ENCODE measurements at regions of chr10 and their contacts with region 1.

Region 1: DNA sequence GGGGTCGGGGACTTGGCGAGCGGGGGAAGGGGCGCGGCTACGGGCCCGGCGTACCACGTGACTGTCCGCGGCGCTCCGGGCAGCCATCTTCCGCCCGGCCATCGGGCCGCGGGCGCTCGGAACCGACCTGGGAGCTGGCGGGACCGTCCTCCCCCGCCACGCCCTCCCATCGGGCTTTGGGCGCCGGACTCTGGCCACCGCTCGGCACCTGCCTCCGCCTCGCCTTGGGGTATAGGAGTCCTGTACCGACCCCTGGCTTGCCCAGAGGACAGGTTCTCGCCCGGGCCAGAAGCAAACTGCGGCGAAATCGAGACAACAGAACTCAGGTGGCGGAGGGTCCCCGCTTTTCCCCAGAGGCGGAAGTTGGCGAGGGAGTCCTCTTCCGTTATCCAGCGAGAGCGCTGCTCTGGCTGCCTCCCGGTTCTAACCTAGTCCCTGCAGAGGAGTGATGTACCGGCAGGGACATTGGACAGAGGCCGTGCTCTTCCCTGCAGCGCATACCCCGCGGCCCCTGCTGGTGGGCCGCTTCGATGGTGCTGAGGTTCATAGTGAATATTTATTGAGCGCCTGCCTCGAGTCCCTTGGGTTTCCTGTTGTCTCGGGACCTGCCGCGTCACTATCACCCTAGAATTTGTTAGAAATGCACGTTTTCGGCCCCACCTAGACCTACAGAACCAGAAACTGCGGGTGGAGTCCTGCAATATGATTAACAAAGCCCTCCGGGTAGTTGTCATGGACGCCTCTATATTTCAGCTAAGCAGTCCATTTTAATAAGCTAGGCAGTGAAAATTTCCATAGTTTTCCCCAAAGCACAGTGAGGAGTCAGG is 1.3 kb upstream of the SGMS1 start:
- DNase-seq: peak; percentile 70
- H3K4me3 Mint-ChIP-seq: peak overlapping the region; percentile 82
- H3K27ac Mint-ChIP-seq: peak overlapping the region; percentile 87
- H3K4me1 Mint-ChIP-seq: peaks cover 33% of the 10 kb centered on the region
- H3K27me3 Mint-ChIP-seq: peaks cover 1% of the 10 kb centered on the region

Region 2: GRCh38 chr10:49538381-49539319 is 1086.4 kb before region 1 on chr10 and contains the start of gene ERCC6:
- CTCF ChIA-PET with region 1: no interaction called
- POLR2A ChIA-PET with region 1: no interaction called
- intact Hi-C with region 1: loop called (anchors 5 kb)
- DNase-seq: peak; percentile 98
- H3K4me3 Mint-ChIP-seq: peak within 1 kb of the TSS; percentile 89
- H3K27ac Mint-ChIP-seq: peak within 1 kb of the TSS; percentile 95
- H3K4me1 Mint-ChIP-seq: peaks cover 34% of the 10 kb centered on the region
- H3K27me3 Mint-ChIP-seq: peaks cover 24% of the 10 kb centered on the region
- total RNA-seq, gene ERCC6: 17.5 to 18.8 TPM

Region 3: GRCh38 chr10:50410066-50410811 is 214.8 kb before region 1 on chr10:
- CTCF ChIA-PET with region 1: no interaction called
- POLR2A ChIA-PET with region 1: no interaction called
- intact Hi-C with region 1: no loop called
- DNase-seq: no peak
- H3K4me3 Mint-ChIP-seq: no peak overlapping the region
- H3K27ac Mint-ChIP-seq: no peak overlapping the region
- H3K4me1 Mint-ChIP-seq: peaks cover 10% of the 10 kb centered on the region
- H3K27me3 Mint-ChIP-seq: no peaks in the 10 kb centered on the region

Region 4: GRCh38 chr10:50431791-50432190 is 193.3 kb before region 1 on chr10:
- CTCF ChIA-PET with region 1: no interaction called
- POLR2A ChIA-PET with region 1: no interaction called
- intact Hi-C with region 1: loop called (anchors 1 kb)
- DNase-seq: peak; percentile 39
- H3K4me3 Mint-ChIP-seq: no peak overlapping the region
- H3K27ac Mint-ChIP-seq: no peak overlapping the region
- H3K4me1 Mint-ChIP-seq: peaks cover 31% of the 10 kb centered on the region
- H3K27me3 Mint-ChIP-seq: no peaks in the 10 kb centered on the region

Region 5: DNA sequence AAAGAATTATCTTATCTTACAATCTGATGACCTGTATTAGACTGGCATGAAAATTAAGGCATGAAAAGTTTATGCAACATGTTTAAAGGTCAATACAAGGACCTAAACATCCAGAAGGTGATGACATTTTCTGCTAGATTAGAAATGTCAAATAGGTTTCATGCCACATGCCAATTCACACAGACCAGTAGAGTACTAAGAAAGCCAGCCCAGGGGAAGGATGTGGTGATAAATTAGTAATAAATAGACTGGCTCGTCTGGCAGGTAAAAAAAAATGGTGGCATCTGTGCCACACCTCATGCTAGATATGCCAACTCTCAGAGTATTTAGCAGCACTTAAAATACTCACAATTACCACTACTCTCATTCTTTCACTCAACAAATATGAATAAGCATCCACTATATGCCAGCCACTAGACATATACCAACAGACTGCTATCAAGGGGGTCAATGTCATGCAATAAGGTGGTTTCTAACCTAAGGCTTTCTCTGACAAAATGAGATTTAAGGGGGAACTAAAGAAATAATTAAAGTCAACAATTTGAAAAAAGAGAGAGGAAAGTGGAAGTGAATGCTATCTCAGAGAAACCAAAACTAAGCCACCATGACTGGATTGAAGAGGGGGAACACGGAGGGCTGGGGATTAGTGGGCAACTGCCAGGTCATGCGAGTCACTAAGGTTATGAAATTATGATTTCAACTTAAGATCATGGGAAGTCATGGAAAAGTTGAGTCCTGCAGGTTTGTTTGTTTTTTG is 84.8 kb before region 1 on chr10:
- CTCF ChIA-PET with region 1: no interaction called
- POLR2A ChIA-PET with region 1: interaction called, 19 read pairs
- intact Hi-C with region 1: loop called (anchors 1 kb)
- DNase-seq: peak; percentile 70
- H3K4me3 Mint-ChIP-seq: peak overlapping the region; percentile 36
- H3K27ac Mint-ChIP-seq: peak overlapping the region; percentile 75
- H3K4me1 Mint-ChIP-seq: peaks cover 86% of the 10 kb centered on the region
- H3K27me3 Mint-ChIP-seq: no peaks in the 10 kb centered on the region

Region 6: GRCh38 chr10:50577681-50578350 is 47.3 kb before region 1 on chr10:
- CTCF ChIA-PET with region 1: interaction called, 5 read pairs
- POLR2A ChIA-PET with region 1: interaction called, 5 read pairs
- intact Hi-C with region 1: loop called (anchors 5 kb)
- DNase-seq: peak; percentile 21
- H3K4me3 Mint-ChIP-seq: no peak overlapping the region
- H3K27ac Mint-ChIP-seq: no peak overlapping the region
- H3K4me1 Mint-ChIP-seq: peaks cover 57% of the 10 kb centered on the region
- H3K27me3 Mint-ChIP-seq: no peaks in the 10 kb centered on the region

Region 7: DNA sequence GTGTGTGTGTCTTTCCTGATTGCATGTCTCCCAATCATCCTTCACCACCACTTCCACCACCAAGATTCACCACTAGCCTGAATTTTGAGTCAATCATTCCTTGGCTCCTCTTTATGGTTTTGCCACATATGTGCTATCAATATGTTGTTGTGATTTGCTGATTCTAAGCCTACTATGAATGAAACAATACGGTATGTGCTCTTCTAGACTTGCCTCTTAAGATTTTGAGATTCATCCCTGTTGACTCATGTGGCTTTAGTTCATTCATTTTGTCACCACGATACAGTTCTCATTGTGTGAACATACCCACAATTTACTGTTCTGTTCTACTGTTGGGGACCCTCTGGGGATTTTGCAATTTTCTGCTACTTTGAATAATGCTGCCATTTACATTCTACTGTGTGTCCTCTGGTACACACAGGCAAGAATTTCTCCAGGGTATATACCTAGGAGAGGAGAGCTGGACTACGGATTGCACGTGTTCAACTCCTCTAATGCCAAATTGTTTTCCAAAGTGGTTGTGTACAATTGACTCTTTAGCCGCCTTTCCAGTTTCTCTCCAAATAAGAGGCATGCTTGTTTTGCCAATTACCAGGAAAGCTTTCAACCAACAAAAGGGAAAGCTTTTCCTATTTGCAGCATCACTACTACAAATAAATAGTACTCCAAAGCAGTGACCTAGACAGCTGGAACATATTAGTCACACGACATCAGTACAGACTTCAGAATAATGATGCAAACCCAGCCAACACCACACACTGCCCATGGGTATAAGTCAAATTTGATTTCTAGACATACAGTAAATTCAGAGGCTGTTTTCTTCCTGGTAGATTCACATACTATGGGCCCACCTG is 31.3 kb before region 1 on chr10:
- CTCF ChIA-PET with region 1: no interaction called
- POLR2A ChIA-PET with region 1: no interaction called
- intact Hi-C with region 1: no loop called
- DNase-seq: no peak
- H3K4me3 Mint-ChIP-seq: no peak overlapping the region
- H3K27ac Mint-ChIP-seq: no peak overlapping the region
- H3K4me1 Mint-ChIP-seq: peaks cover 13% of the 10 kb centered on the region
- H3K27me3 Mint-ChIP-seq: no peaks in the 10 kb centered on the region

Region 8: DNA sequence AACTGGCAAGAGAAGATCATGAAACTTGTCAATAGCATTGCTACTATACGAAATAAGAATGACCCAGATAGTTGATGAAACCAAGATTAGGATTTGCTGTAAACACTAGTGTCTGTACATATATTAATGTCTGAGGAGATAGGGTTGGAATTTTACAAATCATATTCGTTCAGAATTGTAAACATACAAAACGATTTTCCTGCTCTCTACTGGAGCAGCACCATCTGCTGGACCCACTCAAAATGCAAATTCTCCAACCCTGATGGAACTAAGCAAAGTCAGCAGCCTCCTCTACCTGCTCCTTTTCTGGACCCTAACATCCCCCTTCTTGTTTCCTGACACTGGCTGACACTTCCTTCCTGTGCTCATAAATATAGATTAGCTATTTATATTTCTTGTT is 28.1 kb after region 1 on chr10:
- CTCF ChIA-PET with region 1: interaction called, 3 read pairs
- POLR2A ChIA-PET with region 1: no interaction called
- intact Hi-C with region 1: loop called (anchors 2 kb)
- DNase-seq: peak; percentile 32
- H3K4me3 Mint-ChIP-seq: no peak overlapping the region
- H3K27ac Mint-ChIP-seq: no peak overlapping the region
- H3K4me1 Mint-ChIP-seq: peaks cover 14% of the 10 kb centered on the region
- H3K27me3 Mint-ChIP-seq: no peaks in the 10 kb centered on the region

Region 9: GRCh38 chr10:50794490-50794889 is 169.4 kb after region 1 on chr10:
- CTCF ChIA-PET with region 1: no interaction called
- POLR2A ChIA-PET with region 1: no interaction called
- intact Hi-C with region 1: no loop called
- DNase-seq: no peak
- H3K4me3 Mint-ChIP-seq: no peak overlapping the region
- H3K27ac Mint-ChIP-seq: no peak overlapping the region
- H3K4me1 Mint-ChIP-seq: no peaks in the 10 kb centered on the region
- H3K27me3 Mint-ChIP-seq: peaks cover 8% of the 10 kb centered on the region

Measured in activated CD4-positive, alpha-beta memory T cell treated with anti-CD3 and anti-CD28 coated beads for 36 hours (primary cell).